Naive thymus-derived CD4-positive, alpha-beta T cell (primary cell): ENCODE measurements at regions of chr6 and their contacts with region 1.

Region 1: GRCh38 chr6:30955367-30956042 is 14.7 kb downstream of the MUCL3 start:
- DNase-seq: peak; percentile 49 to 76 (median 63)
- ATAC-seq: peak; percentile 84
- H3K4me3 ChIP-seq: peak overlapping the region; percentile 62
- H3K4me3 Mint-ChIP-seq: peak overlapping the region; percentile 59 to 92 (median 86)
- H3K27ac ChIP-seq: peak overlapping the region; percentile 50
- H3K27ac Mint-ChIP-seq: peak overlapping the region in 8 of 9 donors; percentile 77 to 93 (median 89)
- H3K4me1 ChIP-seq: peaks cover 5 to 12% of the 10 kb centered on the region in 2 donors
- H3K4me1 Mint-ChIP-seq: peaks cover 3 to 37% (median 27%) of the 10 kb centered on the region in 7 donors
- H3K27me3 ChIP-seq: no peaks in the 10 kb centered on the region
- H3K27me3 Mint-ChIP-seq: peaks cover 5 to 81% (median 7%) of the 10 kb centered on the region in 5 donors

Region 2: GRCh38 chr6:30907758-30908591 is 47.5 kb before region 1 on chr6 and contains the start of gene GTF2H4:
- CTCF ChIA-PET with region 1: no interaction called
- POLR2A ChIA-PET with region 1: no interaction called
- intact Hi-C with region 1: loop called in 1 of 2 experiments (anchors 1 kb)
- DNase-seq: peak; percentile 77 to 96 (median 89)
- ATAC-seq: peak; percentile 99
- H3K4me3 ChIP-seq: peak within 1 kb of the TSS; percentile 90
- H3K4me3 Mint-ChIP-seq: peak within 1 kb of the TSS; percentile 95 to 100 (median 99)
- H3K27ac ChIP-seq: peak within 1 kb of the TSS; percentile 78
- H3K27ac Mint-ChIP-seq: peak within 1 kb of the TSS; percentile 72 to 95 (median 82)
- H3K4me1 ChIP-seq: peaks cover 6 to 9% of the 10 kb centered on the region in 2 donors
- H3K4me1 Mint-ChIP-seq: peaks cover 15 to 34% (median 22%) of the 10 kb centered on the region in 7 donors
- H3K27me3 ChIP-seq: no peaks in the 10 kb centered on the region
- H3K27me3 Mint-ChIP-seq: no peaks in the 10 kb centered on the region
- total RNA-seq, gene GTF2H4: 18.8 to 42.3 (median 32.2) TPM

Region 3: DNA sequence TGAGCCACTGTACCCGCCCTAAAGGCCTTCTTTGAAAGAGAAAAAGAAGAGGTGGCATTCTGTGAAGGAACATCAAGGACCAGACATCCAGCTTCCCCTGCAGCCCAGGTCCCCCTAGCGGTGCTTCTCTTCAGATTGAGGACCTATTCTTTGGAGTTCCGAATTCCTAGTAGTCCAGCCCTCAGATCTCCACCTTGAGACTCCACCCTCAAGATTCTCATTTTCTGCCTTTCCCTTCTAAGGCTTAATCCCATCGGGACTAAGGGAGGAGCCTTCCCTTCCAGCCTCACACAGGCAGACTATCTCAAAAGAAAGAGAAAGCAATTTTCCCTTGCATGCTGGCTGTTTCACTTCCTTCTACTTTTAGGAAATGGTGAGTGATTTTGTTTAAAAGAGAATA is 87.3 kb after region 1 on chr6:
- CTCF ChIA-PET with region 1: no interaction called
- POLR2A ChIA-PET with region 1: no interaction called
- intact Hi-C with region 1: loop called in 1 of 2 experiments (anchors 2 kb)
- DNase-seq: peak in 6 of 9 donors; percentile 6 to 37 (median 15)
- ATAC-seq: peak; percentile 57
- H3K4me3 ChIP-seq: no peak overlapping the region
- H3K4me3 Mint-ChIP-seq: peak overlapping the region in 5 of 10 donors; percentile 24 to 69 (median 57)
- H3K27ac ChIP-seq: no peak overlapping the region
- H3K27ac Mint-ChIP-seq: no peak overlapping the region
- H3K4me1 ChIP-seq: no peaks in the 10 kb centered on the region
- H3K4me1 Mint-ChIP-seq: peaks cover 0 to 11% (median 3%) of the 10 kb centered on the region in 7 donors
- H3K27me3 ChIP-seq: no peaks in the 10 kb centered on the region
- H3K27me3 Mint-ChIP-seq: peaks cover 1 to 33% (median 16%) of the 10 kb centered on the region in 5 donors